ENCODE measurements at regions of chr11 and their contacts with region 1.

Region 1: GRCh38 chr11:41461057-41461681 is 1.7 kb upstream of the LRRC4C start:
- DNase-seq: no peak
- H3K4me3 Mint-ChIP-seq: no peak overlapping the region
- H3K27ac Mint-ChIP-seq: no peak overlapping the region
- H3K4me1 Mint-ChIP-seq: no peaks in the 10 kb centered on the region
- H3K27me3 Mint-ChIP-seq: peaks cover 10% of the 10 kb centered on the region

Region 2: GRCh38 chr11:41413843-41414242 is 47.3 kb before region 1 on chr11:
- CTCF ChIA-PET with region 1: no interaction called
- DNase-seq: no peak
- H3K4me3 Mint-ChIP-seq: no peak overlapping the region
- H3K27ac Mint-ChIP-seq: no peak overlapping the region
- H3K4me1 Mint-ChIP-seq: no peaks in the 10 kb centered on the region
- H3K27me3 Mint-ChIP-seq: no peaks in the 10 kb centered on the region

Region 3: DNA sequence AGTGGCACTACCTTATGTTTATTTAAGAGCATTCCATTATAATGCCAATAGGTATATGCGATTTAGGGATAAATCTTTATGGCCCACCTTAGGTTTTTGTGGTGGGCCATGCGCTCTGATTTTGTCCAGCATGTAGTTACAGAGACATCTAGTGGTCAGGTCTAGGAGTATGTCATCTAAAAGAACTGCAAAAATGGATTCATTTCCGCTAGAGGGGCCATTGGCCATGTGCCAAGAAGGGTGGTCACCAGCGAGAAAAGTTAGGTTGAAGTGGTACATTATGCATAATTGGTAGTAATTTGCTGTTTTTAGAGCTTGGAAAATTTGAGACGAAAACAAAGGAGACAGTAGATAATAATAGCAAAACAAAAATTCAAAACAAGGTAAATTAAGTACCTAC is 29.4 kb before region 1 on chr11:
- CTCF ChIA-PET with region 1: no interaction called
- DNase-seq: no peak
- H3K4me3 Mint-ChIP-seq: no peak overlapping the region
- H3K27ac Mint-ChIP-seq: no peak overlapping the region
- H3K4me1 Mint-ChIP-seq: no peaks in the 10 kb centered on the region
- H3K27me3 Mint-ChIP-seq: no peaks in the 10 kb centered on the region

Region 4: GRCh38 chr11:42524534-42525227 is 1063.5 kb after region 1 on chr11:
- CTCF ChIA-PET with region 1: interaction called, 13 read pairs
- DNase-seq: peak; percentile 36
- H3K4me3 Mint-ChIP-seq: no peak overlapping the region
- H3K27ac Mint-ChIP-seq: no peak overlapping the region
- H3K4me1 Mint-ChIP-seq: no peaks in the 10 kb centered on the region
- H3K27me3 Mint-ChIP-seq: no peaks in the 10 kb centered on the region

Region 5: GRCh38 chr11:43282607-43283440 is 1821.7 kb after region 1 on chr11:
- CTCF ChIA-PET with region 1: interaction called, 10 read pairs
- DNase-seq: peak; percentile 53
- H3K4me3 Mint-ChIP-seq: no peak overlapping the region
- H3K27ac Mint-ChIP-seq: no peak overlapping the region
- H3K4me1 Mint-ChIP-seq: no peaks in the 10 kb centered on the region
- H3K27me3 Mint-ChIP-seq: peaks cover 8% of the 10 kb centered on the region

Measured in activated naive CD4-positive, alpha-beta T cell treated with anti-CD3 and anti-CD28 coated beads, Interleukin-2, amount 10 ng/mL, durations not matched to agents 7 days and 5 days (primary cell).